ENCODE measurements at regions of chr2 and their contacts with region 1.

Region 1: GRCh38 chr2:84631047-84631446 is 114.7 kb downstream of the DNAH6 start:
- DNase-seq: no peak
- H3K4me3 ChIP-seq: no peak overlapping the region
- H3K27ac ChIP-seq: no peak overlapping the region
- H3K4me1 ChIP-seq: no peaks in the 10 kb centered on the region
- H3K27me3 ChIP-seq: no peaks in the 10 kb centered on the region
- CTCF ChIP-seq: peak; percentile 56

Region 2: DNA sequence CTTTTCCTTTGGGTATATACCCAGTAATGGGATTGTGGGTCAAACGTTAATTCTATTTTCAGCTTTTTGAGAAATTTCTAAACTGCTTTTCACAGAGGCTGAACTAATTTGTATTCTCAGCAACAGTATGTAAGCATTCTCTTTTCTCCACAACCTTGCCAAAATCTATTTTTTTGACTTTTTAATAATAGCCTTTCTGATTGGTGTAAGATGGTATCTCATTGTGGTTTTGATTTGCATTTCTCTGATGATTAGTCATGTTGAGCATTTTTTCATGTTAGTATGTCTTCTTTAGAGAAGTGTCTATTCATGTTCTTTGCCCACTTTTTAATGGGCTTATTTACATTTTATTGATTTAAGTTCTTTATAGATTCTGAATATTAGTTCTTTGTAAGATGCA is 104.3 kb after region 1 on chr2:
- intact Hi-C with region 1: no loop called
- DNase-seq: no peak
- H3K4me3 ChIP-seq: no peak overlapping the region
- H3K27ac ChIP-seq: no peak overlapping the region
- H3K4me1 ChIP-seq: no peaks in the 10 kb centered on the region
- H3K27me3 ChIP-seq: no peaks in the 10 kb centered on the region
- CTCF ChIP-seq: no peak

Region 3: GRCh38 chr2:84881581-84882414 is 250.8 kb after region 1 on chr2:
- intact Hi-C with region 1: loop called (anchors 10 kb)
- DNase-seq: peak; percentile 94
- H3K4me3 ChIP-seq: peak overlapping the region; percentile 65
- H3K27ac ChIP-seq: peak overlapping the region; percentile 66
- H3K4me1 ChIP-seq: no peaks in the 10 kb centered on the region
- H3K27me3 ChIP-seq: peaks cover 5% of the 10 kb centered on the region
- CTCF ChIP-seq: peak; percentile 44

Measured in colonic mucosa (tissue), 4 donors.